Prostate gland (tissue), 2 donors: ENCODE measurements at regions of chr14 and their contacts with region 1.

Region 1: GRCh38 chr14:51780006-51780692 is 80.3 kb upstream of the GNG2 start:
- DNase-seq: peak; percentile 72
- H3K4me3 ChIP-seq: no peak overlapping the region
- H3K27ac ChIP-seq: no peak overlapping the region
- H3K4me1 ChIP-seq: peaks cover 3% of the 10 kb centered on the region
- H3K27me3 ChIP-seq: no peaks in the 10 kb centered on the region
- CTCF ChIP-seq: peak; percentile 75 to 88 (median 80)
- POLR2A ChIP-seq: no peak

Region 2: GRCh38 chr14:50954811-50955372 is 825.3 kb before region 1 on chr14:
- intact Hi-C with region 1: loop called (anchors 10 kb)
- DNase-seq: no peak
- H3K4me3 ChIP-seq: no peak overlapping the region
- H3K27ac ChIP-seq: no peak overlapping the region
- H3K4me1 ChIP-seq: no peaks in the 10 kb centered on the region
- H3K27me3 ChIP-seq: no peaks in the 10 kb centered on the region
- CTCF ChIP-seq: peak; percentile 18 to 70 (median 50)
- POLR2A ChIP-seq: no peak

Region 3: GRCh38 chr14:51651388-51652167 is 128.6 kb before region 1 on chr14 and contains the start of gene FRMD6:
- intact Hi-C with region 1: loop called (anchors 1 kb)
- DNase-seq: peak; percentile 83
- H3K4me3 ChIP-seq: peak within 1 kb of the TSS; percentile 76 to 83
- H3K27ac ChIP-seq: peak within 1 kb of the TSS; percentile 96 to 97
- H3K4me1 ChIP-seq: no peaks in the 10 kb centered on the region
- H3K27me3 ChIP-seq: no peaks in the 10 kb centered on the region
- CTCF ChIP-seq: peak; percentile 71 to 83 (median 77)
- POLR2A ChIP-seq: peak; percentile 76
- total RNA-seq, gene FRMD6: 59.1 to 84.0 TPM

Region 4: DNA sequence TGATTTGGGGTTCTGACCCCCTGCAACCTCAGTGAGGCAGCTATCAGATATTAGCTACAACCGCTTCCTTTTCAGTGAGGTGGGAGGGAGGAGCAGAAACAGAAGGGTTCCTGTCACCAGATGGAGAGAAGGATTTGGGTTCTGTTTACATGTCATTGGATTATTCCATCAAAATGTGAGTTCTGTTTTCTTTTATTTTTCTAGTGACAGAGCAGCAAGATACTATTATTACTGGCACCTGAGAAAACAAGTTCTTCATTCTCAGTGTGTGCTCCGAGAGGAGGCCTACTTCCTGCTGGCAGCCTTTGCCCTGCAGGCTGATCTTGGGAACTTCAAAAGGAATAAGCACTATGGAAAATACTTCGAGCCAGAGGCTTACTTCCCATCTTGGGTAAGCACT is 75.6 kb before region 1 on chr14:
- intact Hi-C with region 1: no loop called
- DNase-seq: no peak
- H3K4me3 ChIP-seq: no peak overlapping the region
- H3K27ac ChIP-seq: no peak overlapping the region
- H3K4me1 ChIP-seq: no peaks in the 10 kb centered on the region
- H3K27me3 ChIP-seq: no peaks in the 10 kb centered on the region
- CTCF ChIP-seq: no peak
- POLR2A ChIP-seq: no peak

Region 5: DNA sequence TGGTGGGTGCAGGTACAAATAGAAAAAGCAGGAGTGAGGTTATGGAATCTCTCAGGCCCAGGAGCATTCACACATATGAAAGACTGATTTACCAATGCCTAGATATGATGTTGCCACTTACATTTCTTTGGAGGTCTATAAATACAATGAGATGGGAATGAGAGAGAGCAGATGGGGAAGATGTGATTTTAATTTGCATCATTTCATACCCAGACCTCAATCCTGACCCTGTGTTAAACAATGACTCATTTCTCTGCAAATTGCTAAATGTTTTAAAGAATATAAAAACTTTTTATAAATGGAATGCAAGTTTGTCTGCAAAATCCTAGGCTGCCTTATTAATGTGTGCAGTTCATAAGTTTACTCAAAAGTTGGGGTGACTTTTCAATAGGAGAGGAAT is 41.7 kb after region 1 on chr14:
- intact Hi-C with region 1: no loop called
- DNase-seq: no peak
- H3K4me3 ChIP-seq: no peak overlapping the region
- H3K27ac ChIP-seq: no peak overlapping the region
- H3K4me1 ChIP-seq: no peaks in the 10 kb centered on the region
- H3K27me3 ChIP-seq: no peaks in the 10 kb centered on the region
- CTCF ChIP-seq: no peak
- POLR2A ChIP-seq: no peak

Region 6: GRCh38 chr14:51979088-51979709 is 199.1 kb after region 1 on chr14:
- intact Hi-C with region 1: loop called (anchors 5 kb)
- DNase-seq: peak; percentile 70
- H3K4me3 ChIP-seq: no peak overlapping the region
- H3K27ac ChIP-seq: no peak overlapping the region
- H3K4me1 ChIP-seq: no peaks in the 10 kb centered on the region
- H3K27me3 ChIP-seq: no peaks in the 10 kb centered on the region
- CTCF ChIP-seq: peak; percentile 71 to 87 (median 76)
- POLR2A ChIP-seq: no peak